ENCODE measurements at regions of chr9 and their contacts with region 1.

Region 1: DNA sequence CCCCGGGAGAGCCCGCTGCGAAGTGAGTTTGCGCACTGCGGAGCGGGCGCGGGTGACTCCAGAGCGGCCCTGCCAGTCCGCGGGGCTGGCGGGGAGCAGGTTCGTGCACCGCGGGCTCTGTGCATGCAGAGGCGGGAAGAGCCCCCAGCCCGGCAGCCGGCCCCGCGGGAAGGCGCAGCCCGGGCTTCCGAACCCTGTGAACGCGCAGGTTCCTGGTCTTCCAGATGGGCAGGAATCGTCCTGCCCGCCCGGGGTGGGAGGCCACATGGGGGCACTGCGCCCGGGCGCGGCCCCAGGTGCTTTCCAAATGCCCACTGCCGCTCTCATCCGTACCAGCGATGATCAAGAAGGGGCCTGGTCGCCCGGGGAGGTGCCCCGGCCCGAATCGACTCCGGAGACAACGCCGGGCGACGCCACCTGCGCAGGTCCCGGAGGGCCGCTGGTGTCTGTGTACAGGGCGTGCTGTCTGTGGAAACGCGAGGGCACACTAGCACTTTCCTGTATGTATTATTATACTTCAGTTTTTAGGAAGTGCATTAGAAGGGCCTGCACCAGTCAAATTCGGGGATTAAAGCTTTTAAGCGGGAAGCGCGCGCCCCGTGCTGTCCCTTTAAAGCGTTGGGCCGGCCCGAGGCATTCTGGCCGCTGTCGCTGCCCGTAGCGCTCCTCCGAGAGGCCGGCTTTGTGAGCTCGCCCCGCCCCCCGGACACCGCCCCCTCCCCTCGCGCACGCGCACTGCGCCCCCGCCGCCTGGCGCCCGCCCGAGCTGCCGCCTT is at the start of gene WDR5:
- DNase-seq: peak; percentile 91 to 93
- H3K4me3 ChIP-seq: peak within 1 kb of the TSS; percentile 99
- H3K4me3 Mint-ChIP-seq: peak within 1 kb of the TSS; percentile 94
- H3K27ac Mint-ChIP-seq: peak within 1 kb of the TSS; percentile 88
- H3K4me1 ChIP-seq: peaks cover 32% of the 10 kb centered on the region
- H3K4me1 Mint-ChIP-seq: peaks cover 26% of the 10 kb centered on the region
- H3K27me3 ChIP-seq: no peaks in the 10 kb centered on the region
- H3K27me3 Mint-ChIP-seq: no peaks in the 10 kb centered on the region
- CTCF ChIP-seq: peak in 1 of 2 experiments; percentile 25
- total RNA-seq, gene WDR5: 51.7 and 54.8 TPM in 2 replicates

Region 2: GRCh38 chr9:133673258-133673655 is 462.3 kb before region 1 on chr9:
- CTCF ChIA-PET with region 1: no interaction called
- POLR2A ChIA-PET with region 1: no interaction called
- intact Hi-C with region 1: no loop called
- DNase-seq: no peak
- H3K4me3 ChIP-seq: no peak overlapping the region
- H3K4me3 Mint-ChIP-seq: no peak overlapping the region
- H3K27ac Mint-ChIP-seq: no peak overlapping the region
- H3K4me1 ChIP-seq: 0 out of 2 replicates have a peak, but pooled peaks cover 5% of the 10 kb centered on the region
- H3K4me1 Mint-ChIP-seq: peaks cover 9% of the 10 kb centered on the region
- H3K27me3 ChIP-seq: no peaks in the 10 kb centered on the region
- H3K27me3 Mint-ChIP-seq: no peaks in the 10 kb centered on the region
- CTCF ChIP-seq: no peak

Region 3: GRCh38 chr9:134163353-134164196 is 28.0 kb after region 1 on chr9:
- CTCF ChIA-PET with region 1: interaction called, 4 read pairs
- POLR2A ChIA-PET with region 1: interaction called, 5 read pairs
- intact Hi-C with region 1: loop called (anchors 2 kb)
- DNase-seq: peak; percentile 54 to 62
- H3K4me3 ChIP-seq: no peak overlapping the region
- H3K4me3 Mint-ChIP-seq: no peak overlapping the region
- H3K27ac Mint-ChIP-seq: no peak overlapping the region
- H3K4me1 ChIP-seq: no peaks in the 10 kb centered on the region
- H3K4me1 Mint-ChIP-seq: no peaks in the 10 kb centered on the region
- H3K27me3 ChIP-seq: no peaks in the 10 kb centered on the region
- H3K27me3 Mint-ChIP-seq: no peaks in the 10 kb centered on the region
- CTCF ChIP-seq: no peak

Measured in Caco-2 (cell line).